Common myeloid progenitor, CD34-positive (primary cell): ENCODE measurements at regions of chrX and their contacts with region 1.

Region 1: DNA sequence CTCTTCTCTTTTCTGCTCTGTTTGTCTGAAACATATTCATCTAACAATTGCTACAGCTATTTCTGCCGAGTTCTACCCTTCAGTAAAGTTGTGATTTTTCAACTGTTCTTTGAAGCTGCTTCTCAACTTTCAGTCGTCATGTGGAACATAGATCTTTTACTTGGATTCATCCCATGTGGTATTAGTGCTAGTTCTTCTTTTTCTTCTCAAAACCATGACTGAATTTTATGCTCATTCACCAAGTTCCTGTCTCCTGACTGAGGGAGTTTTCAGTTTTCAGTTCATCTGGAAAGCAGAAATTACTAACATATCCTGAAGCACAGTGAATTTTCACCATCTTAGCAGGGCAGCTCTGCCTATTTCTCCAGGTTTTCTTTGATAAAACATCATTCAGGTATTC is 12.1 kb downstream of the ACSL4 start:
- DNase-seq: peak in 2 of 3 donors; percentile 55 to 61
- H3K4me3 ChIP-seq: no peak overlapping the region
- H3K27ac ChIP-seq: peak overlapping the region in 1 of 2 experiments; percentile 3
- H3K4me1 ChIP-seq: peaks cover 0 to 8% (median 3%) of the 10 kb centered on the region in 4 experiments
- H3K27me3 ChIP-seq: no peaks in the 10 kb centered on the region

Region 2: DNA sequence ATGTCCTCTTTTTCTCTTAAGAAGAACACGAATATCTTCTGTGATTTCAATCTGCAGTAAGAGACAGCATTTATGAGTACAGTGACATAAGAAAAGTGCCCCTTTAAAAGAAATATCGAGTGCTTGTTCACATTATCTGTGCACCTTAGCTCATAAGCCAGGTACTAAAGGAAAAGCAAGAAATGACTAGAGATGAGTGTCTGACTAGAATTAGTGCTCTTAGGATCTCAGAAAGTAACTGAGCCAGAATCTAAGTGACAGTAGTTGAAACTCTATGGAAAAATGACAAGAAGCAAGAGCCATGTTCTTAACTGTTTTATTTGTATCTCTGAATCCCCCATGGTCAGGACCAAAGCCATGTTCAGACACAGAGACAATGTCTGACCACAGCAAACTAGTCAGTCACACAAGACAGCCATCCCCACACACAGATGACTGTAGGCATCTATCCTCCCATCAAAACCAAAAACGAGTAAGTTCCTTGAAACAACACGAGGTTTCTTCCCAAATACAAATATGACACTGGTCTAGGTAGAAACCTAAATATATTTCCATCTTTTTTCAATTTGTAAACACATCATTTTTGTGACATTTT is 24.7 kb before region 1 on chrX:
- CTCF ChIA-PET with region 1: no interaction called
- POLR2A ChIA-PET with region 1: no interaction called
- DNase-seq: no peak
- H3K4me3 ChIP-seq: no peak overlapping the region
- H3K27ac ChIP-seq: no peak overlapping the region
- H3K4me1 ChIP-seq: peaks cover 0 to 4% (median 0%) of the 10 kb centered on the region in 4 experiments
- H3K27me3 ChIP-seq: no peaks in the 10 kb centered on the region

Region 3: DNA sequence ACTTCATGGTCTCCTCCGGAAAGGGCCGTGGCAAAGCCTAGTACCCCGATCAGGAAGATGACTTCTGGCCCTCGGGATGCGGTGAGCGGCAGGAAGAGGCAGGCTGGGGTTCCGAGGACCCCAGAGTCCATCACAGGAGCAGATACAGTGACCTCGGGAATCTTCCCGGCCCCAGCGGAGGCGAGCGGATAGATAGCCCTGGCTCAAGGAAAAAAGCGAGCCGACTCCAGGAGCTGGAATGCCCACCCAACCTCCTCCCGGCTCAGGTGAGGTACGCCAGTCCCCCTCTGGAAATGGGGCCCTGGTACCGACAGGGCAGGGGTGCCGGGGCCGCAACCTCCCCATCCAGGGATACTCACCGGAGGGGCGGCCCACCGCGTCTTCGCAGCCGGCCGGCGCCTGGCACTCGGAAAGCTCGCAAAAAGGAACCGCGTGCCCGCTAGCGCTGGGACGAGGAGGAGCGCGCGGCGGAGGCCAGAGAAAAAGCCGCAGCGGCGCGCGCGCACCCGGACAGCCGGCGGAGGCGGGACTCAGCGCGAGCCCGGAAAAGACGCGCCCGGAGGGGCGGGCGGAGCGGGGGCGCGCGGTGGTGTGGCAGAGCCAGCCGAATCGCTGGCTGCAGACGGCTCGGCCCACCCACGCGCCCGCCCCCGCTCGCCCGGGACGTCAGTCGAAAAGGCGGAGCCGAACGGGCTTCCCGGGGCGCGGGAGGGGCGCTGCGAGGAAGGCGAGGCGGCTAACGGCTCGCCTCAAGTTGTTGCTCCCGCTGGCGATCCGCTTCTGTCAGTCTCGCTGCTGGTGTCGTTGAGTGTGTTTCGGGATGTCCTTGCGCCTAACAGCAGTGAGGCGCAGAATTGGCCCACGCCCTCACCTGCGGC is 12.1 kb after region 1 on chrX and contains the start of gene ACSL4:
- CTCF ChIA-PET with region 1: interaction called, 10 read pairs
- POLR2A ChIA-PET with region 1: no interaction called
- DNase-seq: peak; percentile 81 to 91 (median 88)
- H3K4me3 ChIP-seq: peak within 1 kb of the TSS; percentile 67 to 90 (median 82)
- H3K27ac ChIP-seq: peak within 1 kb of the TSS in 1 of 2 experiments; percentile 78
- H3K4me1 ChIP-seq: peaks cover 5 to 33% (median 16%) of the 10 kb centered on the region in 4 experiments
- H3K27me3 ChIP-seq: no peaks in the 10 kb centered on the region

Region 4: DNA sequence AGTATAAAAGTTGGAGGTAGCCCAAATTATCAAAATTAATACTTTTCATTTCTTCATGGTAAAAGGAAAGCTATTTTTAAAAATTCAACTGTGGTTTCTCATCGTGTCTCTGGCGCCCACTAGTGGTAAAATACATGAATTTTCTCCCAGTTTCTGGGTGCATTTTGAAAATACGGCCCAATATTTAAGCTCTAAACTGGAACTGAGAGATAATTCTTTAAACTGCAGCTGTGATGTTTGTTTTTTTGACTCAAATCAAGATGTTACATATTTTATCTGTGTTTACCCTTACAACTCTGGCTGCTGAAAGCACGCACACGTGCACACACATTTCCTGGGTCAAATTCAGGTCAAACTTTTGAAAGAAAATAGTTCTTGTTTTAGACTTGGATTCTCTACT is 136.0 kb after region 1 on chrX:
- CTCF ChIA-PET with region 1: interaction called, 114 read pairs
- POLR2A ChIA-PET with region 1: no interaction called
- DNase-seq: peak; percentile 29 to 71 (median 66)
- H3K4me3 ChIP-seq: no peak overlapping the region
- H3K27ac ChIP-seq: no peak overlapping the region
- H3K4me1 ChIP-seq: peaks cover 0 to 2% (median 0%) of the 10 kb centered on the region in 4 experiments
- H3K27me3 ChIP-seq: no peaks in the 10 kb centered on the region

Region 5: GRCh38 chrX:109902665-109903064 is 181.7 kb after region 1 on chrX:
- CTCF ChIA-PET with region 1: no interaction called
- POLR2A ChIA-PET with region 1: no interaction called
- DNase-seq: peak in 1 of 3 donors; percentile 10
- H3K4me3 ChIP-seq: no peak overlapping the region
- H3K27ac ChIP-seq: no peak overlapping the region
- H3K4me1 ChIP-seq: peaks cover 0 to 6% (median 0%) of the 10 kb centered on the region in 4 experiments
- H3K27me3 ChIP-seq: no peaks in the 10 kb centered on the region